Endothelial cell of umbilical vein (primary cell): ENCODE measurements at regions of chr1 and their contacts with region 1.

Region 1: GRCh38 chr1:194069168-194069830 is 882.9 kb upstream of the B3GALT2 start:
- DNase-seq: no peak
- H3K4me3 ChIP-seq: no peak overlapping the region
- H3K27ac ChIP-seq: no peak overlapping the region
- H3K4me1 ChIP-seq: peaks cover 2% of the 10 kb centered on the region
- H3K27me3 ChIP-seq: no peaks in the 10 kb centered on the region
- CTCF ChIP-seq: no peak
- POLR2A ChIP-seq: no peak

Region 2: GRCh38 chr1:193417945-193418744 is 651.2 kb before region 1 on chr1:
- CTCF ChIA-PET with region 1: no interaction called
- POLR2A ChIA-PET with region 1: no interaction called
- dilution Hi-C with region 1: no loop called
- intact Hi-C with region 1: loop called (anchors 10 kb)
- DNase-seq: peak; percentile 77
- H3K4me3 ChIP-seq: peak overlapping the region; percentile 24 to 69 (median 36)
- H3K27ac ChIP-seq: peak overlapping the region; percentile 5
- H3K4me1 ChIP-seq: peaks cover 8% of the 10 kb centered on the region
- H3K27me3 ChIP-seq: no peaks in the 10 kb centered on the region
- CTCF ChIP-seq: no peak
- POLR2A ChIP-seq: no peak

Region 3: GRCh38 chr1:194056169-194056568 is 13.1 kb before region 1 on chr1:
- CTCF ChIA-PET with region 1: no interaction called
- POLR2A ChIA-PET with region 1: no interaction called
- dilution Hi-C with region 1: no loop called
- intact Hi-C with region 1: no loop called
- DNase-seq: no peak
- H3K4me3 ChIP-seq: no peak overlapping the region
- H3K27ac ChIP-seq: no peak overlapping the region
- H3K4me1 ChIP-seq: peaks cover 14% of the 10 kb centered on the region
- H3K27me3 ChIP-seq: no peaks in the 10 kb centered on the region
- CTCF ChIP-seq: no peak
- POLR2A ChIP-seq: no peak